ENCODE measurements at regions of chr22 and their contacts with region 1.

Region 1: DNA sequence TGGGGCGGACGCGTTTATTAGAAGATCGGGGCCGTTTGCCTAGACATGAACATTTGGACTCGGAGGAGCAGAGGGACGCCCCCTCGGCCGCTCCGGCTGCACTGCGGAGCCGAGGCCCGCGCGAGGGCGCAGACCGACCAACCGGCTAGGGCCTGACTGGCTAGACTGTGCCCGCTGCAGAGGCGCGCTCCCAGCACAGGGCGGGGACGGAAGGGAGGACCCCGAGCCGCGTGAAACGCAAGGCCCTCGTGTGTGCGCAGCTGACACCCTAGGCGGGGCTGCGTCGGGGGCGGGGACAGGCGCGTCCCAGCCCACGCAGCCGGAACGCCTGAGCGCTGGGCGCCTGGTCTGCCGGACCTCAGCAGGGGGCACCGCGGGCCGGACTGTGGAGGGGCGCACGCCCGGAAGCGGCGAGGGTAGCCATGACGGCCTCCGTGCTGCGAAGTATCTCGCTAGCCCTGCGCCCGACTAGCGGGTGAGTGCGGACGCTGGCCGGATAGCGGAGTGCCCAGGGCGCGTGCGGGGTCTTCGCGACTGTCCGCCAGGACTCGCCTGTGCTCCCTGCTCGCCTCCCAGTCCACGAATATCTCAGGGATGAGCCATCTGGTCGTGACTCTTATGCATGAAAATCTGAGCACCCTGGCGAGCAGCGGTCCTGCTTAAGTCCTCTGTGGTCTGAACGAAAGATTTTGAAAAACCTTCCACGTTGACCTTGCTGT is at the start of gene MRPL40:
- DNase-seq: peak; percentile 82 to 97 (median 95)

Region 2: DNA sequence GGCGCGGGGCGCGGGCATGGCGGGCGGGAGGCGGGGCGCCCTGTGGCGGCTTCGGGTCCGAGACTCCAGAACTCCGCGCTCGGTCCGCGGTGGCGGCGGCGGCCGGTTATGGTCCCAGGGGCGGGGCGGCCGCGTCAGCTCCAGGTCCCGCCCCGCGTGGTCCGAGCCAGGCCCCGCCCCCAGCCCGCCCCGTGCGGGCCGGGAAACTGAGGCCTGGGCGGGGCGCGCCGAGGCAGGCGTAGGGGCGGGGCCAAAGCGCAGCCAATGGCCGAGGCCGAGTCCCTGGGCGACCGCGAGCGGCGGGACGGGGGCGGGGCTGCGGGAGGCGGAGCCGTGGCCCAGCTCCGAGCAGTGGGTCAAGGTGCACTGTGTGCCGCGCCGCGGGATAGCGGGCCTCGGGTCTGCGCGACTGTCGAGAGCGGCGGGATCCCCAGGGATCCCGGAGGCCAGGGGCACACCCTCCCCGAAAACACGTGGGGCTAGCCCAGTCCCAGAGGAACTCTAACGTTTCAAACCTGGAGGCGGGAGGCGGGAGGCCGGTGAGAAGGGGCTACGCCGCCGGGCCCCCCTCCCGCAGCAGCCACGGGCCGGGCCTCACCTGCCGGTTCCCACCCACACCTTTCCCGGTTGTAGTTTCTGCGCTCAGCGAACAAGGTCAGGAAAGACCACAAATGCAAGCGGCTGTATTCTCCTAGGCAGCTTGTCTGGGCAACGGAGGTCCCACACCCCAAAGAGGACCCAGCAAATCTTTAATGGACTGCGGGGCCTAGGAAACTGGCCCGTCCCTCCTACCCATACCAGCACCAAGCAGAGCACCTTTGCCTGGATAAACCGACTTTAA is 253.4 kb before region 1 on chr22 and contains the start of gene SLC25A1:
- intact Hi-C with region 1: loop called (anchors 5 kb)
- DNase-seq: peak; percentile 80 to 97 (median 94)

Region 3: GRCh38 chr22:19291580-19292457 is 140.5 kb before region 1 on chr22 and contains the start of gene CLTCL1:
- intact Hi-C with region 1: no loop called
- DNase-seq: peak; percentile 18 to 92 (median 84)

Region 4: DNA sequence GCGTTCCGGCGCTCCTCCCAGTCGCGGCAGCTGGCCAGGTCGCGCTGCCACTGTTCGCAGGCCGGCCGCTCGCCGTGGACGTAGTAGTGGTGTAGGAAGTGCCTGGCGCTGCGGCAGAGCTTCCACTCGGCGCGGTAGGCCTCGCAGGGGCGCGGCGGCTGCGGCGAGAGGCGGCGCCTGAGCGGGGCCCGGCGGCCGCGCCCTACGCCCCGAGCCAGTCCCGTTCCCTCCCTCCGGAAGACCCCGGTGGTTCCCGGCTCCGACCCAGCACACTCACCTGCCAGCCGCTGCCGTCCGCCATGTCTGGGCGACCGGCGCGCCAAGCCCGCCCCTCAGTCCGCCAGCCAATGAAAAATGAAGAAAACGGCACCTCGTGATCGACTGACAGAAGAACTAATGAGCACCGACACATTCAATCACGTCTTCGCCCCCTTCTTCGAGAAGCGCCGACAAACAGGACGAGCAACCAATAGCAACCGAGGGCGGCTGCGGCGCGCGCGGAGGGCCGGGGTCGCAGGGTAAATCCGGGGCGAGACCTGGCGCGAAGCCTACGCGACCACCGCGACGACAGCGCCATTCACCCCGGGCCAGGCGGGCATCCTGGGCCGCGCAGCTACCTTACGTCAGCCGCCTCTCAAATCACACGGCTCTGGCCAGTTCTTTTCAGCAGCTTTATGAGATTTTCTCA is 15.2 kb after region 1 on chr22 and contains the start of gene C22orf39:
- intact Hi-C with region 1: loop called (anchors 2 kb)
- DNase-seq: peak; percentile 90 to 98 (median 96)

Region 5: DNA sequence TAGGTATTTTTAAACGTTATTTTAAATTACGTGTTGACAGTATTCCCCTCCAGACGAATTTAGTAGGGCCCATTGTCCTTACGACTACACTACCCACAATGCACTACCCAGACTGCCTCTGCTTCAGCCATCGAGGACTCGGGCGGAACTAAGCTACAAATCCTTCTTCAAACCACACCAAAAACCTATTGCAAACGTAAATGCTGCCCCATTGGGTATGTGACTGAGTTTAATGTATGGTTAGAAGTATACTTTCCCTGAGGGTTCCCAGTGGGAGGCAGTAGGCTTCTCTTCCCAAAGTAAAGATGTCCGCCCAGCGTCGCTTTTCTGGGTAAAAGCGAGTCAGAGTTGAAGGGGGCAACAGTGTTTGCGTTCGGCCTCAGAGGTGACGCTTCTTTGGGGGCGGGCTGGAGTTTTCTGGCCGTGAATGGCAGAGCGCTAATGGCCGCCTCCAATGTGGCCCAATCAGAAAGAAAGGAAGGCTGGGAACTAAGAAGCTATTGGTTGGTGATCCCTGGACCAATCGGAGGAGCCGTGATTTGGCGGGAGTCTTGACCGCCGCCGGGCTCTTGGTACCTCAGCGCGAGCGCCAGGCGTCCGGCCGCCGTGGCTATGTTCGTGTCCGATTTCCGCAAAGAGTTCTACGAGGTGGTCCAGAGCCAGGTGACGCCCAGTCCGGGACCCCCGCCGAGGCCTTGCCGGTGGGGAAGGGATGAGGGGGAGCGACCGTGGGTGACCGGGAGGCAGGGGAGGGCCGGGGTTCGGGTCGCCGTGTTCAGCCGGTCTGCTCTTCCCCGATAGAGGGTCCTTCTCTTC is 47.3 kb after region 1 on chr22 and contains the start of gene CDC45:
- intact Hi-C with region 1: loop called (anchors 5 kb)
- DNase-seq: peak; percentile 90 to 99 (median 98)

Measured in head of caudate nucleus (tissue), 42 donors.